Heart left ventricle (tissue), 16 donors: ENCODE measurements at regions of chr15 and their contacts with region 1.

Region 1: DNA sequence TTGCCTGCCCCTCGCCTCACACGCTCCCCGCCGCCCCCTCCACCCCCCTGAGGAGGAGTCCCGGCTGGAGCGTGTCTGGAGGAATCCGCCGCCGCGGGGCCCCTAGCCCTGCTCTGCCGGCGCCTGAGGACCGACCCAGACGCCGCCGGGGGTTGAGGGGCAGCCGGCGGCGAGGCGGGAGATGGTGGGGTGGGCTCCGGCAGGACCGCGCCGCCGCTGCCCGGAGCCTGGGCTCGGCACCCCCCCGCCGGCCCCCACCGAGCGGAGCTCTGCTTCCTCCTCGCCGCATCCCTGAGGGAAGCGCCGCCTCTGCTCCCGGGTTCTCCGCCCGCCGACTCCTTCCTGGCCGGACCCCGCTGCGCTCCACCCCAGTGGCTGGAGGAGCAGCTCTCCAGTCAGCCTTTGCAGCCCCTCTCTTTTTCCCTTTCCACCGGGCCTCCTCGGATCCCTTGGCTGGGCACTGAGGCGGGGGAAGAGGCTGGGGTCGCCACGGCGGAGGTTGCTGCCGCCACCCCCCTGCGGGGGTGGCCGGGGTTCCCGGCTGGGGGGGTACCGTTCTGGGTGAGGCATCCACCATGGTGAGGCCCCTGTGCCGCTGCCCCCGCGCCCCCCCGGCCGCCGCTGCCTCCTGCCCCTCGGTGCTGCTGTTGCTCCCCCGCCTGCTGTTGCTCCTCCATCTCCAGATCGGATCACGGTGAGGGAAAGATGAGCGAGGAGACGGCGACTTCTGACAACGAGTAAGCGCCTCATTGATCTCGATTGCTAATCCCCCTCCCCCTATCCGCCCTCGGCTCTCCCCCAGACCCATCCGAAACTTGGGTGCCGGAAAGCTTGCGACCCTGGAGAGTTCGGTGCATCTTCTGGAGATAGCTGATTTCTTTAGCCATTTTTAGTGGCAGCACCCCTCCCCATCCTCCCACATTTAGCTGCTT is at the start of gene SPRED1:
- DNase-seq: peak; percentile 86 to 90 (median 86)
- ATAC-seq: peak; percentile 29 to 83 (median 71)
- H3K4me3 ChIP-seq: peak within 1 kb of the TSS; percentile 78 to 97 (median 85)
- H3K27ac ChIP-seq: peak within 1 kb of the TSS; percentile 96 to 100 (median 99)
- H3K4me1 ChIP-seq: peaks cover 0 to 41% (median 33%) of the 10 kb centered on the region in 12 donors
- H3K27me3 ChIP-seq: no peaks in the 10 kb centered on the region
- CTCF ChIP-seq: no peak
- POLR2A ChIP-seq: no peak
- total RNA-seq, gene SPRED1: 6.1 to 34.8 (median 10.9) TPM

Region 2: DNA sequence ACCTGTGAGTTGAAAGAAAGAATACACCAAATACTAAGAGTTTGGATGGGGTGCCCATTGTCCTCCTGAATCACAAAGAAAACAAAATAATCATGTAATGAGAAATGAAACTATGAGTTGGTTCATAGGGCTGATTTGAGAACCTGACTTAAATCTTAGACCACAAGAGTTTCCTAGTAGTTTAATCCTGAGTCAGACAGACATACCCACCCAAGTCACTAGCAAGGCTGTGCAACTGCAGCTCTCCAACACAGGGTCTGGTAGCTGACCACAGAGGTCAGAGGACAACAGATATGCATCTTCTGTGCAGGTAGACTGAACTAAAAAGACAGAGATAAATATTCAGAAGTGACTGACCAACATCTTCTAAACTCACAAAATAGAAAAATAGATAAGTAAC is 614.6 kb before region 1 on chr15:
- intact Hi-C with region 1: no loop called
- DNase-seq: no peak
- ATAC-seq: no peak
- H3K4me3 ChIP-seq: no peak overlapping the region
- H3K27ac ChIP-seq: no peak overlapping the region
- H3K4me1 ChIP-seq: no peaks in the 10 kb centered on the region
- H3K27me3 ChIP-seq: no peaks in the 10 kb centered on the region
- CTCF ChIP-seq: no peak
- POLR2A ChIP-seq: no peak

Region 3: DNA sequence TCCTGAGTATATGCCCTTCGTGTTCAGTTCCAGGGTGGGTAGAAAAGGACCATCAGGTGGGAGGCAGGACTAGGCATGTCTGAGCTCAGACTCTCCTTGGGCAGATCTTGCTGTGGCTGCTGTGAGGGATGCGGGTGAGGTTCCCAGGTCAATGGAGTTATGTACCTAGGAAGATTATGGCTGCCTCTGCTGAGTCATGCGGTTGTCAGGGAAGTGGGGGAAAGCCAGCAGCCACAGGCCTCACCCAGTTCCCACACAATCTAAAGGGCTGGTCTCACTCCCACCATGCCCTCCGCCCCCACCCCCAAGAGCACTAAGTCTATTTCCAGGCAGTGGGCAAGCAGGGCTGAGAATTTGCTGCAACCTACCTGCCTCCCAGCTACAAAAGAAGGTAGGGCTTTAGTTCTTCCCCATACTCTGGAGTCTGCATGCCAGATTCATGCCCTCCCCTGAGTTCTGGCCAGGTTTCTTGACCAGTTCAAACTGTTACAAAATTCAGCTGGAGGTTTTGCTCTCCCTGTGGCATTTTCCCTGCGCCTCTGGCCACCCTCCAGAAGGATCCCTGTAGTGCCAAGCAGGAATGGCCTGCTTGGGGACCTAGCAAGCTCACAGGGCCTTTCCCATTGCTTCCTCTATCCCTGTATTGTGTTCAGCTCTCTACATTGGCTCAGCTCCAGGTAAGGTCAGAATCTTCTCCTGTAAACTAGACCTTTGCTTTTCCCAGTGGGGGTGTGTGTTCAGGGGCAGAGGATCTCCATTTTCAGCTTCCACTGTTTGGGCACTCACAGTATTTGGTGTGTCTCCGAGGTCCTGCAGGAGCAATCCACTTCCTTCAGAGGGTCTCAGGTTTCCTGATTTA is 331.0 kb before region 1 on chr15:
- intact Hi-C with region 1: no loop called
- DNase-seq: peak in 1 of 5 donors; percentile 48
- ATAC-seq: no peak
- H3K4me3 ChIP-seq: no peak overlapping the region
- H3K27ac ChIP-seq: no peak overlapping the region
- H3K4me1 ChIP-seq: no peaks in the 10 kb centered on the region
- H3K27me3 ChIP-seq: peaks cover 0 to 4% (median 0%) of the 10 kb centered on the region in 9 donors
- CTCF ChIP-seq: no peak
- POLR2A ChIP-seq: no peak

Region 4: GRCh38 chr15:38002883-38003477 is 249.8 kb before region 1 on chr15:
- intact Hi-C with region 1: loop called in 8 of 10 experiments (anchors 5 to 10 kb)
- DNase-seq: peak; percentile 41 to 65 (median 50)
- ATAC-seq: peak in 3 of 4 donors; percentile 75 to 83 (median 77)
- H3K4me3 ChIP-seq: no peak overlapping the region
- H3K27ac ChIP-seq: no peak overlapping the region
- H3K4me1 ChIP-seq: peaks cover 0 to 34% (median 4%) of the 10 kb centered on the region in 12 donors
- H3K27me3 ChIP-seq: no peaks in the 10 kb centered on the region
- CTCF ChIP-seq: peak; percentile 36 to 71 (median 60)
- POLR2A ChIP-seq: no peak

Region 5: GRCh38 chr15:38085114-38085513 is 167.6 kb before region 1 on chr15:
- intact Hi-C with region 1: loop called in 1 of 10 experiments (anchors 5 kb)
- DNase-seq: no peak
- ATAC-seq: peak in 3 of 4 donors; percentile 56 to 70 (median 61)
- H3K4me3 ChIP-seq: no peak overlapping the region
- H3K27ac ChIP-seq: peak overlapping the region in 4 of 12 donors; percentile 17 to 83 (median 38)
- H3K4me1 ChIP-seq: peaks cover 0 to 54% (median 5%) of the 10 kb centered on the region in 12 donors
- H3K27me3 ChIP-seq: no peaks in the 10 kb centered on the region
- CTCF ChIP-seq: no peak
- POLR2A ChIP-seq: no peak

Region 6: DNA sequence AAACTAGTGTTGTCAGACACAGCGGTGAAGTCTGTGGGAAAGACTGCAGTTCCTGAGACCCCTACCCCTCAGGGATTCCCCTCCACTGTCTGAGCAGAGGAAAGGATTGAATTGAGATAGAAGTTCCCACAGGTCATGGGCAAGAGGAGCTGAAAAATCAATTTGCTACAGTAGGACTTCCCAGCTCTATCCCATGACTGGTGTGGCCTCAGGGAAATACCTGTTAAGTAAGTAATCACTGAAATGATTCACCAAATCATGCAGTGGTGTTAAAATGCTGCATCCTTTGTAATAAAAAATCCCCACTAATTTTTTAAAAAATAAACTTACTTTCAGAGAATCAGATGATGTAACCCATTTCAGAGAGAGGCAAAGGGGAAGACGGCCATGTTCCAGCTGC is 45.1 kb before region 1 on chr15:
- intact Hi-C with region 1: loop called in 1 of 10 experiments (anchors 5 kb)
- DNase-seq: no peak
- ATAC-seq: no peak
- H3K4me3 ChIP-seq: no peak overlapping the region
- H3K27ac ChIP-seq: peak overlapping the region in 1 of 12 donors; percentile 4
- H3K4me1 ChIP-seq: peaks cover 0 to 37% (median 17%) of the 10 kb centered on the region in 12 donors
- H3K27me3 ChIP-seq: no peaks in the 10 kb centered on the region
- CTCF ChIP-seq: no peak
- POLR2A ChIP-seq: no peak

Region 7: DNA sequence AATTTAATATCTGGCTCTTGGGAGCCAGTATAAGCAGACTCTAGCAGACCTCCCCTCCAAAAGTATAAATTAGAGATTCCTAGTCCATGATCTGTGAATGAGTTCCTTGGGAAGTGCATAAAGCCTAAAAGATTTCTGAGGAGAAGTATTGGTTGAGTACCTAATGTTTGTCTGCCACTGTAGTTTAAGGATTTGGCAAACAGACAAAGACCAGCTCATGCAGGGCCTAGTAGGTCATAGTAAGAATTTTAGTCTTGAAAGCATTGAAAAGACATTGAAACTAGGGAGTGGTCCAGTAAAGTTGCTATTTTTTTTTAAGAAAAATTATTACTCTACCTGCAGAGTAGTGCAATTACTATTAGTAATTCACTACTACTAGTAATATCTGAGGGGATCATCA is 67.4 kb after region 1 on chr15:
- intact Hi-C with region 1: loop called in 2 of 10 experiments (anchors 10 kb)
- DNase-seq: no peak
- ATAC-seq: no peak
- H3K4me3 ChIP-seq: no peak overlapping the region
- H3K27ac ChIP-seq: no peak overlapping the region
- H3K4me1 ChIP-seq: peaks cover 0 to 17% (median 0%) of the 10 kb centered on the region in 12 donors
- H3K27me3 ChIP-seq: no peaks in the 10 kb centered on the region
- CTCF ChIP-seq: no peak
- POLR2A ChIP-seq: no peak

Region 8: DNA sequence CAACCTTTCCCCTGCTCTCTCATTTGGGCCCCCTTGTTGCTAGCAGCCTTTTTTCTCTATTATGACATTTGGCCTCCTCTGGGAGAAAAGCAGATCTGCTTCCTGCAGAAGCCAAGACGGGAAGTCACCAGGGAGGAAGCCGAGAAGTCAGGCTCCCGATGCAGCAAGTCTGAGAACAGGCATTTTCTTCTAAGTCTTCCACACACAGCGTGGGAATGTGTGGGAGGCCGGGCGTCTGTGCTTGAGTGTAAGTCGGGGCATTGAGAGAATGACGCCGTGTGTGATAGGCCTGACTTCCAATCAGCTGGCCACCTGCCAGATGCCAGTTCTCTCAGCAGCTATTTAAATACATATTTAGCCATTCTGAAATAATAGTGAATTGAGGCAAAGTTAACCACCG is 125.4 kb after region 1 on chr15:
- intact Hi-C with region 1: loop called in 1 of 10 experiments (anchors 5 kb)
- DNase-seq: peak; percentile 76 to 84 (median 80)
- ATAC-seq: peak; percentile 47 to 86 (median 79)
- H3K4me3 ChIP-seq: peak overlapping the region in 1 of 12 donors; percentile 1
- H3K27ac ChIP-seq: peak overlapping the region in 11 of 12 donors; percentile 22 to 84 (median 59)
- H3K4me1 ChIP-seq: peaks cover 0 to 54% (median 41%) of the 10 kb centered on the region in 12 donors
- H3K27me3 ChIP-seq: no peaks in the 10 kb centered on the region
- CTCF ChIP-seq: no peak
- POLR2A ChIP-seq: no peak